Activated CD4-positive, alpha-beta memory T cell treated with anti-CD3 and anti-CD28 coated beads, Interleukin-2, amount 10 ng/mL, durations not matched to agents 7 days and 5 days (primary cell): ENCODE measurements at regions of chr6 and their contacts with region 1.

Region 1: GRCh38 chr6:70884074-70884983 is 72.5 kb downstream of the B3GAT2 start:
- DNase-seq: peak; percentile 60
- H3K4me3 Mint-ChIP-seq: no peak overlapping the region
- H3K27ac Mint-ChIP-seq: no peak overlapping the region
- H3K4me1 Mint-ChIP-seq: no peaks in the 10 kb centered on the region
- H3K27me3 Mint-ChIP-seq: peaks cover 2% of the 10 kb centered on the region

Region 2: DNA sequence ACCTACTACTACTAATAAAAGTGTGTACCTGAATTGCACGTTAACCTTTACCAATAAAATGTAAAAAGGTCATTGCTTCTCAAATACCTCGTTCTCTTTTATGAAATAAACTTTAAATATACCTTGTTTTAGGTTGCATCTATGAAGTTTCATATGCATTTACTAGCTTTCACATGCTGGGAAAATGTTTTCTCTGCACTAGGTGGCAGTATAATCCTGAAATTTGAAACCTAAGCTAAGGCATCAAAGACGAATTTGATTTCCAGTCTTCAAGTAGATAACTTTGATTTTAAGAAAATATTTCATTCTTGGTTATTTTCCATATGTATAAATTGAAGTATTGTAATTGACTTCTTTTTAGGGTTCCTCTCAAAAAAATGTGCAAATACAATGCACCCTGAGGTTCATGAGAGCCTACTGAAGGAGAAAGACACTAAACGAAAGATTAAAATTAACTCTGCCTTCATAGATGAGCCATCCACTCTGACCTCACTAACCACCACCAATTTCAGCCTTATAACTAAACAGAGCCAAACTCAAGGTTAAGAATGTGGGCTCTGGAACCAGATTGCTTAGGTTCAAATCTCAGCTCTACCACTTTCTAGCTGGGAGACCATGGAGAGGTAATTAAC is 574.1 kb before region 1 on chr6:
- CTCF ChIA-PET with region 1: interaction called, 10 read pairs
- POLR2A ChIA-PET with region 1: no interaction called
- DNase-seq: no peak
- H3K4me3 Mint-ChIP-seq: no peak overlapping the region
- H3K27ac Mint-ChIP-seq: no peak overlapping the region
- H3K4me1 Mint-ChIP-seq: peaks cover 1% of the 10 kb centered on the region
- H3K27me3 Mint-ChIP-seq: peaks cover 27% of the 10 kb centered on the region

Region 3: DNA sequence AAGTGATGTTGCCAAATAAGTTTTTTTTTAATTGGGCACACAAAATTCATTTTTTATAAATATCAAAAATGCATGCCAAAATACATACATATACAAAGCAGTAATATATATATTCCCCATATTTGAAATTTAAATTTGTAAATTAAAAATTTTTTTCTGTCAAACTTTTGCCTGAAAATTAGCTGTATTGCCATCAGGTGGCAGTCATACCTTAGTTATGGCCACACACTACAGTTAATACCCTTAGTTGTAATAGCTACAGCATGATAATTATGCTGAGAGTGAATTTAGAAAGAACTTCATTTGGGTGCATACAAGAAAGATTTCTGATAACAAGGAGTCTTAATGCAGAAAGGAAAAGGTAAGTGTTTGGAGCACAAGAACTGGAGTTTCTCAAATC is 363.8 kb before region 1 on chr6:
- CTCF ChIA-PET with region 1: interaction called, 39 read pairs
- POLR2A ChIA-PET with region 1: no interaction called
- DNase-seq: no peak
- H3K4me3 Mint-ChIP-seq: no peak overlapping the region
- H3K27ac Mint-ChIP-seq: no peak overlapping the region
- H3K4me1 Mint-ChIP-seq: peaks cover 4% of the 10 kb centered on the region
- H3K27me3 Mint-ChIP-seq: no peaks in the 10 kb centered on the region

Region 4: DNA sequence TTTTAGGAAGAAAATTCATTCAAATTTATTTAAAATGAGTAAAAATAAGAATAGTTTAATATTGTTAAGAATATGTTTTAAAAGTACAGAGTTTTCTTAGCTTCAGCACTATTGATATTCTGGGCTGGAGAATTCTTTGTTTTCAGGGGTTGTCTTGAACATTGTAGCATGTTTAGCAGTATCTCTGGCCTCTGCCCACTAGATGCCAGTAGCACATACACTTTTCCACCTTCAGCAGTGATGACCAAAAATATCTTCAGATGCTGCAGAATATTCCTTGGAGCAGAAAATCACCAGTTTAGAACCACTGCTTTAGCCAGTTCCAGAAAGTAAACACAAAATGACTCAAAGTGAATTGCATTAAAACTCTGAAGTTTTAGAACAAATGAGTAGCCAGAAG is 337.0 kb before region 1 on chr6:
- CTCF ChIA-PET with region 1: interaction called, 16 read pairs
- POLR2A ChIA-PET with region 1: no interaction called
- DNase-seq: no peak
- H3K4me3 Mint-ChIP-seq: no peak overlapping the region
- H3K27ac Mint-ChIP-seq: no peak overlapping the region
- H3K4me1 Mint-ChIP-seq: no peaks in the 10 kb centered on the region
- H3K27me3 Mint-ChIP-seq: no peaks in the 10 kb centered on the region

Region 5: GRCh38 chr6:70706491-70707123 is 177.7 kb before region 1 on chr6:
- CTCF ChIA-PET with region 1: interaction called, 96 read pairs
- POLR2A ChIA-PET with region 1: no interaction called
- DNase-seq: no peak
- H3K4me3 Mint-ChIP-seq: no peak overlapping the region
- H3K27ac Mint-ChIP-seq: no peak overlapping the region
- H3K4me1 Mint-ChIP-seq: peaks cover 23% of the 10 kb centered on the region
- H3K27me3 Mint-ChIP-seq: no peaks in the 10 kb centered on the region

Region 6: GRCh38 chr6:71012866-71013469 is 128.6 kb after region 1 on chr6:
- CTCF ChIA-PET with region 1: no interaction called
- POLR2A ChIA-PET with region 1: no interaction called
- DNase-seq: no peak
- H3K4me3 Mint-ChIP-seq: no peak overlapping the region
- H3K27ac Mint-ChIP-seq: no peak overlapping the region
- H3K4me1 Mint-ChIP-seq: no peaks in the 10 kb centered on the region
- H3K27me3 Mint-ChIP-seq: peaks cover 4% of the 10 kb centered on the region